B cell (primary cell): ENCODE measurements at regions of chr1 and their contacts with region 1.

Region 1: GRCh38 chr1:67735806-67736627 is 51.0 kb downstream of the GADD45A start:
- DNase-seq: peak; percentile 58
- ATAC-seq: peak; percentile 98
- H3K4me3 ChIP-seq: peak overlapping the region; percentile 18 to 55 (median 30)
- H3K4me3 Mint-ChIP-seq: peak overlapping the region; percentile 89
- H3K27ac ChIP-seq: peak overlapping the region; percentile 33 to 71
- H3K27ac Mint-ChIP-seq: peak overlapping the region; percentile 98
- H3K4me1 ChIP-seq: peaks cover 32 to 43% of the 10 kb centered on the region in 2 donors
- H3K4me1 Mint-ChIP-seq: peaks cover 40% of the 10 kb centered on the region
- H3K27me3 ChIP-seq: no peaks in the 10 kb centered on the region
- H3K27me3 Mint-ChIP-seq: no peaks in the 10 kb centered on the region
- CTCF ChIP-seq: no peak

Region 2: GRCh38 chr1:67685067-67685557 is 50.9 kb before region 1 on chr1 and contains the start of gene GADD45A:
- CTCF ChIA-PET with region 1: interaction called, 3 read pairs
- POLR2A ChIA-PET with region 1: interaction called, 4 read pairs
- intact Hi-C with region 1: loop called (anchors 1 kb)
- DNase-seq: peak; percentile 95
- ATAC-seq: peak; percentile 88
- H3K4me3 ChIP-seq: peak within 1 kb of the TSS; percentile 66 to 91 (median 80)
- H3K4me3 Mint-ChIP-seq: peak within 1 kb of the TSS; percentile 91
- H3K27ac ChIP-seq: peak within 1 kb of the TSS; percentile 15 to 42
- H3K27ac Mint-ChIP-seq: peak within 1 kb of the TSS; percentile 81
- H3K4me1 ChIP-seq: peaks cover 16 to 17% of the 10 kb centered on the region in 2 donors
- H3K4me1 Mint-ChIP-seq: peaks cover 31% of the 10 kb centered on the region
- H3K27me3 ChIP-seq: no peaks in the 10 kb centered on the region
- H3K27me3 Mint-ChIP-seq: no peaks in the 10 kb centered on the region
- CTCF ChIP-seq: no peak
- total RNA-seq, gene GADD45A: 21.1 and 22.7 TPM in 2 replicates

Region 3: GRCh38 chr1:67803380-67804279 is 67.6 kb after region 1 on chr1:
- CTCF ChIA-PET with region 1: no interaction called
- POLR2A ChIA-PET with region 1: no interaction called
- intact Hi-C with region 1: no loop called
- DNase-seq: no peak
- ATAC-seq: no peak
- H3K4me3 ChIP-seq: no peak overlapping the region
- H3K4me3 Mint-ChIP-seq: no peak overlapping the region
- H3K27ac ChIP-seq: no peak overlapping the region
- H3K27ac Mint-ChIP-seq: no peak overlapping the region
- H3K4me1 ChIP-seq: no peaks in the 10 kb centered on the region
- H3K4me1 Mint-ChIP-seq: no peaks in the 10 kb centered on the region
- H3K27me3 ChIP-seq: peaks cover 0 to 6% (median 0%) of the 10 kb centered on the region in 4 experiments
- H3K27me3 Mint-ChIP-seq: peaks cover 48% of the 10 kb centered on the region
- CTCF ChIP-seq: no peak